Activated CD4-positive, alpha-beta T cell treated with anti-CD3 and anti-CD28 coated beads for 36 hours (primary cell): ENCODE measurements at regions of chr18 and their contacts with region 1.

Region 1: DNA sequence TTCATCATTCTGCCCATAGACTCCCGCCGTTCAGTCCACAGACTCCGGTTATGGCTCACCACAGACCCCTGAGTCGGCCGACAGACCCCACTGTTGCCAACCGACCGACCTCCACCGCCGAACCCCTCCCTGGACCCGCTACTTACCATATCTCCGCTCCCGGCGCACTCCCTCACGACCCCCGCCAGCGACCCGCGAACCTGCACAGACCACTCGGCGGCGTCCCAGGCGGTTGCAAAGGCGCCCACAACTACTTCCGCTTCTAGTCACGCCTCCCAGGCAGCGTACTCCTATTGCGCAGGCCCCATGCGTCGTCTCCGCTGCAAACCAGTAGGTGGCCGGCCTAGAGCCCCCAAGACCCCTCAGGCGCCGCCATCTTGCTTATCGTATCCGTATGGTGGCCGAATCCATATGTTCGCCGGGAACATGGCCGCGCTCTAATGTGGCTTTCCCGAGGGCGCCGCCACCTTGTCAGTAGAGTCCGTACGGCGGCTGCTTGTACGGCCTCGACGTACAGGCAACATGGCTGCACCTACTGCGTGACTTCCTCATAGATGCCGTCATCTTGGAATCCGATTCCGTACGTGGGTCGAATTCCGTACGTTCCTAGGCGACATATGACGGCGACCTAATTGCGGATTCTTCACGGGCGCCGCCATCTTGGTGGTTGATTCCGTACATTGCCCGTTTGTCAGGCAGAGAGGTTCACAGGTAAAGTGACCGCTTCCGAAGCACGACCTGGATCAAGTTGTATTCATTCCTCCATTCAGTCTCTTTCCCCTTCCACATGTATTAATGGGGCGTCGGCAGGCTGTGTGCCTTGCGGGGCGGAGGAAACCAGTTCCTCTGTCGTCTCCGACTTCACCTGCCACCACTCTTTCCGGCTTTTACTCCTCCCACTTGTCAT is at the start of gene CXXC1:
- DNase-seq: peak; percentile 98
- ATAC-seq: peak; percentile 92
- H3K4me3 Mint-ChIP-seq: peak within 1 kb of the TSS; percentile 92
- H3K27ac Mint-ChIP-seq: peak within 1 kb of the TSS; percentile 97
- H3K4me1 Mint-ChIP-seq: peaks cover 26% of the 10 kb centered on the region
- H3K27me3 Mint-ChIP-seq: no peaks in the 10 kb centered on the region
- total RNA-seq, gene CXXC1: 68.6 to 80.0 TPM

Region 2: GRCh38 chr18:48951448-48952286 is 1336.0 kb before region 1 on chr18:
- CTCF ChIA-PET with region 1: no interaction called
- POLR2A ChIA-PET with region 1: no interaction called
- intact Hi-C with region 1: loop called in 1 of 2 experiments (anchors 10 kb)
- DNase-seq: peak; percentile 84
- ATAC-seq: peak; percentile 42
- H3K4me3 Mint-ChIP-seq: peak overlapping the region; percentile 97
- H3K27ac Mint-ChIP-seq: peak overlapping the region; percentile 88
- H3K4me1 Mint-ChIP-seq: peaks cover 41% of the 10 kb centered on the region
- H3K27me3 Mint-ChIP-seq: no peaks in the 10 kb centered on the region

Region 3: DNA sequence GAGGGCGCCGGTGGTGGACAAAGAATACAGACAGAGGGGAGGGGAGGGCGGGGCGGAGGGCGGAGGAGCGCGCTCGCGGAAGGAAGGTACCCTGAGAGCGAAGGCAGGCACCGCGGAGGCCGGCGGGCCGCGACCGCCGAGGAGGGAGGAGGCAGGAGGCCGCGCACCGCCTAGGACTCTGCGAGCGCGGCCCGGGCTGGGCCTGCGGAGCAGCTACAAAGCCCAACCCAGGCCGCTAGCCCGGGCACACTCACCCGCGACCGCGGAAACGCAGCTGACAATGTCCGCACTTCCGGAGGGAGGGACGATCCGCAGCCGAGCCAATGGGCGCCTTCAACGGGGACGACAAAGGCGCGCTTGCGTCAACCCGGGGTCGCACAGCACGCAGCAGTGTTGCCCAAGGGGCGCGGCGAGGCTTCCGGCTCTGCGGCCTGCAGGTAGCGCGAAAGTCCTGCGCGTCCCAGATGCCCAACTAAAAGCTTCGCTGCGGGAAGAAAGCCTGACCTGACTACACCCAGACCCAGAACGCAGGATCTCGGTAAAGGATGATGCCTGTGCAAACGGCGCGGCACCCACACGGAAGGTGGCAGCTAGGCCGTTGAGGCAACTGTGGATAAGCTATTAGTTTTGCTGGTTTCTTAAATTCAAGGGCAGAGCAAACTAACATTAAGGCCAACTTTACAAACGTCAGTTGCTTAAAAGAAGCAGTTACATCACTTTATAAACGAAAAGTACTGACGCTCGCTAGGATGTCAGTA is 800.6 kb before region 1 on chr18 and contains the start of gene C18orf32:
- CTCF ChIA-PET with region 1: no interaction called
- POLR2A ChIA-PET with region 1: no interaction called
- intact Hi-C with region 1: loop called (anchors 1 kb)
- DNase-seq: peak; percentile 96
- ATAC-seq: peak; percentile 92
- H3K4me3 Mint-ChIP-seq: peak within 1 kb of the TSS; percentile 95
- H3K27ac Mint-ChIP-seq: peak within 1 kb of the TSS; percentile 100
- H3K4me1 Mint-ChIP-seq: peaks cover 60% of the 10 kb centered on the region
- H3K27me3 Mint-ChIP-seq: no peaks in the 10 kb centered on the region
- total RNA-seq, gene C18orf32: 12.7 to 20.0 TPM

Region 4: GRCh38 chr18:49813319-49814146 is 474.2 kb before region 1 on chr18 and contains the start of gene ACAA2:
- CTCF ChIA-PET with region 1: no interaction called
- POLR2A ChIA-PET with region 1: no interaction called
- intact Hi-C with region 1: loop called (anchors 1 to 5 kb)
- DNase-seq: peak; percentile 92
- ATAC-seq: peak; percentile 93
- H3K4me3 Mint-ChIP-seq: peak within 1 kb of the TSS; percentile 93
- H3K27ac Mint-ChIP-seq: peak within 1 kb of the TSS; percentile 98
- H3K4me1 Mint-ChIP-seq: peaks cover 47% of the 10 kb centered on the region
- H3K27me3 Mint-ChIP-seq: no peaks in the 10 kb centered on the region
- total RNA-seq, gene ACAA2: 63.4 to 75.2 TPM

Region 5: GRCh38 chr18:50297621-50298442 is 10.1 kb after region 1 on chr18:
- CTCF ChIA-PET with region 1: no interaction called
- POLR2A ChIA-PET with region 1: no interaction called
- intact Hi-C with region 1: loop called (anchors 1 kb)
- DNase-seq: peak; percentile 87
- ATAC-seq: peak; percentile 99
- H3K4me3 Mint-ChIP-seq: peak overlapping the region; percentile 65
- H3K27ac Mint-ChIP-seq: peak overlapping the region; percentile 8
- H3K4me1 Mint-ChIP-seq: peaks cover 6% of the 10 kb centered on the region
- H3K27me3 Mint-ChIP-seq: peaks cover 25% of the 10 kb centered on the region

Region 6: GRCh38 chr18:50356036-50356945 is 68.6 kb after region 1 on chr18:
- CTCF ChIA-PET with region 1: interaction called, 7 read pairs
- POLR2A ChIA-PET with region 1: no interaction called
- intact Hi-C with region 1: loop called in 1 of 2 experiments (anchors 5 kb)
- DNase-seq: peak; percentile 30
- ATAC-seq: peak; percentile 77
- H3K4me3 Mint-ChIP-seq: no peak overlapping the region
- H3K27ac Mint-ChIP-seq: peak overlapping the region; percentile 48
- H3K4me1 Mint-ChIP-seq: peaks cover 8% of the 10 kb centered on the region
- H3K27me3 Mint-ChIP-seq: peaks cover 14% of the 10 kb centered on the region

Region 7: GRCh38 chr18:50967714-50968661 is 680.3 kb after region 1 on chr18 and contains the start of gene ELAC1:
- CTCF ChIA-PET with region 1: no interaction called
- POLR2A ChIA-PET with region 1: no interaction called
- intact Hi-C with region 1: loop called in 1 of 2 experiments (anchors 10 kb)
- DNase-seq: peak; percentile 76
- ATAC-seq: peak; percentile 91
- H3K4me3 Mint-ChIP-seq: peak within 1 kb of the TSS; percentile 76
- H3K27ac Mint-ChIP-seq: peak within 1 kb of the TSS; percentile 94
- H3K4me1 Mint-ChIP-seq: peaks cover 30% of the 10 kb centered on the region
- H3K27me3 Mint-ChIP-seq: no peaks in the 10 kb centered on the region
- total RNA-seq, gene ELAC1: 4.7 to 5.6 TPM